Natural killer cell (primary cell): ENCODE measurements at regions of chr6 and their contacts with region 1.

Region 1: GRCh38 chr6:109382576-109383437 is 540 bp upstream of the CD164 start:
- DNase-seq: peak; percentile 93 to 97
- ATAC-seq: peak; percentile 65 to 82 (median 72)
- H3K4me3 ChIP-seq: peak overlapping the region; percentile 95
- H3K4me3 Mint-ChIP-seq: peak overlapping the region; percentile 96
- H3K27ac ChIP-seq: peak overlapping the region; percentile 93
- H3K27ac Mint-ChIP-seq: peak overlapping the region; percentile 88 to 98
- H3K4me1 ChIP-seq: peaks cover 15% of the 10 kb centered on the region
- H3K4me1 Mint-ChIP-seq: peaks cover 55 to 64% of the 10 kb centered on the region in 2 donors
- H3K27me3 ChIP-seq: no peaks in the 10 kb centered on the region
- H3K27me3 Mint-ChIP-seq: no peaks in the 10 kb centered on the region
- CTCF ChIP-seq: peak; percentile 79

Region 2: DNA sequence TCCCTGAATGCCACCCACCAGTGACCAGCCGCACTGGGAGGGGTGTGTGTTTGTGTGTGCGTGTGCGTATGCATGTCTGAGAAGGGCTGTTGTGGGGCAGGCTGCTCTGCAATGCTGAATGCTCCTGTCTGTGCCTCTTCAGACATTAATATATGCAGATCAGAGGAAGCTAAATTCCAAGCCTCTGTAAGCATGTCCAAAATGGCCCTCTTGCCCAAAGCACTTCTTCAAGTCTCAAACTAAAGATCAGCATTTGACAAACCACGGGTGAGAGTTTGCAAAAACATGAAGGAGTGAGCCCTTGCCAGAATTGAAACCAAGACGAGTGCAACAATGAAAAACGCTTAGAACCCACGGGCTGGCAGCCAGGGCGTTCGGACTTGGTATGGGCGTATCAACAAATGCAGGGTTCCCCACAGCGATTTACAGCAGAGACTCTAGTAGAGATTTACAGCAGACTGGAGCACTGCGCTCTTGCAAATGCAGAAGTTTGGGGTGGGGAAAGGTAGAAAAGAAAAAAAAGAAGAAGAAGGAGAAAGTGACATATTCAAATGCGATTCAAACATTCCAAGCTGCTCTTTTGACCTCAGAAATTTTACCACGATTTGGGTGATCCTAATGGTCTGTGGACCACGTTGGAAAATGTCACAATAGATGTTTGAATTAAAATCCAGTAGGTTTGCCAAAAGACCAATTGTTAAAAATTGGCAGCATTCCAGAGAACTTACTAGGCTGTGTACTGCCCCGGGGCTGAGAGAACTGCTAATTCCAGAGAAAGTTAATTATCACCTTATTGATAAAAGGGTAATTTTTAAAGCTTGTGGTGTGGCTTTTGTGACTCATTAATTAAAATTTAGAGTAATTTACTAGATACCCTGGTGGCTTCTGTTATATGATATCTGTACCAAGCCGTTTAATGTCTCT is 1562.2 kb before region 1 on chr6:
- intact Hi-C with region 1: loop called (anchors 5 kb)
- DNase-seq: peak in 1 of 2 donors; percentile 70
- ATAC-seq: peak in 1 of 3 donors; percentile 10
- H3K4me3 ChIP-seq: peak overlapping the region; percentile 16
- H3K4me3 Mint-ChIP-seq: peak overlapping the region; percentile 98
- H3K27ac ChIP-seq: peak overlapping the region; percentile 96
- H3K27ac Mint-ChIP-seq: peak overlapping the region; percentile 89 to 100
- H3K4me1 ChIP-seq: peaks cover 50% of the 10 kb centered on the region
- H3K4me1 Mint-ChIP-seq: peaks cover 76 to 82% of the 10 kb centered on the region in 2 donors
- H3K27me3 ChIP-seq: no peaks in the 10 kb centered on the region
- H3K27me3 Mint-ChIP-seq: no peaks in the 10 kb centered on the region
- CTCF ChIP-seq: no peak

Region 3: DNA sequence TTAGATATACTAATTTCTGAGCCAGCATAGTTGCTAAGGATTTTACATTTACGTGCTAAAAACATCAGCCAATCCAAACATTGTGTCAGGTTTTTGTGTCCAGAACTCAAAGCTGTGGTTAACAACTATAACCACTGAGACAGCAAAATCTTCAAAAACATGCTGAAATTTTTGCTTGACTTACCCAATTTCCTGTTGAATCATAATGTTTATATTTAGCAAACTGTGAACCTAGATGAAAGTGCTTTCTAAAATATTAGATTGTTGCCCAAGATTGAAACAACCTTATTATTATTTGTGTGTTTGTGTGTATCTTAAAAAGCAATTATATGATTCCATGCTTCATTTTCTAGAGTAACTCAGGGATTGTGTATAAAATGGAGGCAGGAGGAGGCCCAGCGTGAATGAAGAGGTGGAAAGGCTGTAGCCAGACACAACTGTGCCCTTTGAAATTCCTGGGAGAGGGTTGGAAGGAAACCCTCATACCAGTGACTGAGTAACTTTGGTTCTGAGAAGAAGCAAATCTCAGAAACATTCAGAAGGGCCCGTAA is 486.6 kb before region 1 on chr6:
- intact Hi-C with region 1: loop called (anchors 10 kb)
- DNase-seq: peak in 1 of 2 donors; percentile 77
- ATAC-seq: peak; percentile 81 to 90 (median 86)
- H3K4me3 ChIP-seq: no peak overlapping the region
- H3K4me3 Mint-ChIP-seq: peak overlapping the region; percentile 94
- H3K27ac ChIP-seq: peak overlapping the region; percentile 91
- H3K27ac Mint-ChIP-seq: peak overlapping the region; percentile 91 to 95
- H3K4me1 ChIP-seq: peaks cover 39% of the 10 kb centered on the region
- H3K4me1 Mint-ChIP-seq: peaks cover 39 to 43% of the 10 kb centered on the region in 2 donors
- H3K27me3 ChIP-seq: no peaks in the 10 kb centered on the region
- H3K27me3 Mint-ChIP-seq: no peaks in the 10 kb centered on the region
- CTCF ChIP-seq: no peak

Region 4: DNA sequence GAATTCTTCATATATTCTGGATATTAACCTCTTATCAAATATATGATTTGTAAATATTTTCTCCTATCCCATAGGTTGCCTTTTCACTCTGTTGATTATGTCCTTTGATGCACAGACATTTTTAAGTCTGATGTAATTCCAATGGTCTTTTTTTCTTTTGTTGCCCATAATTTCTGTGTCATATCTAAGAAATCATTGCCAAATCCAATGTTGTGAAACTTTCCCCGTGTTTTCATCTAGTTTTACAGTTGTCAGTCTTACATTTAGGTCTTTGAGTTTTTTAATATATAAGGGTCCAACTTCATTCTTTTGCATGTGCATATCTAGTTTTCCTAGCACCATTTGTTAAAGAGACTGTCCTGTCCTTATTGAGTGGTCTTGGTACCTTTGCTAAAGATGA is 399.7 kb before region 1 on chr6:
- intact Hi-C with region 1: no loop called
- DNase-seq: no peak
- ATAC-seq: no peak
- H3K4me3 ChIP-seq: no peak overlapping the region
- H3K4me3 Mint-ChIP-seq: no peak overlapping the region
- H3K27ac ChIP-seq: no peak overlapping the region
- H3K27ac Mint-ChIP-seq: no peak overlapping the region
- H3K4me1 ChIP-seq: no peaks in the 10 kb centered on the region
- H3K4me1 Mint-ChIP-seq: peaks cover 0 to 5% of the 10 kb centered on the region in 2 donors
- H3K27me3 ChIP-seq: no peaks in the 10 kb centered on the region
- H3K27me3 Mint-ChIP-seq: no peaks in the 10 kb centered on the region
- CTCF ChIP-seq: no peak

Region 5: DNA sequence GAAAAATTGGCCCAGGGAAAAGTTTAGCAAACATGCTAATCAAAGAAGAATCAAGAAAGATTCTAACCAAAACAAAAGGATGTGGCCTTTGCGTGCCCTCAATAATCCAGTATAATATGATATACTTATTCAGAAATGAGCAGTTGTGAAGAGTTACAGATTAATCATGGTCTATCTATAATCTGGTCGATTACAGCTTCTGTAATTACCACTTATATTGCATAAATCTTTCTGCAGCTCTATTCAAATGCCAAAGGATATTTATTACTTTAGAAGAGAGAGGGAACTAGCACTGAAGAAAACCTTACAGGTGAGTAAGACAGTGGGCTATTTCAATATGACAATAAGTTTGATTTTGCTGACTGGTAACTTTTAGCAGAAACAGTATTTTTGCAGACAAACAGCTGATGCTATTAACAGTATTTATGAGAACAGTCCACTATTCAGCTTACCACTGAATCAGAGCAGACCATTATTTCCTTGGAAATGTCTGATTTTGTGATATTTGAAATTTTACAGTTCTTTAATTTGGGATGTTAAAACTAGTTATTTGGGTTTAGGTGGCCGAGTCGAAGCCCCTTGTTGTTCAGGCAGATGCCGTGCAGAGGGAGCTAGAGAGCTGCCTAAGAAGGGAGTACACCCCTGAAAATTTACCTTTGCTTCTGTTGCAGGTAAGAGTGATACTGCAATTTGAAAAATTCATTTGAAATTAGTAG is 195.2 kb before region 1 on chr6:
- intact Hi-C with region 1: loop called (anchors 1 kb)
- DNase-seq: peak; percentile 43 to 82
- ATAC-seq: peak; percentile 71 to 92 (median 89)
- H3K4me3 ChIP-seq: no peak overlapping the region
- H3K4me3 Mint-ChIP-seq: no peak overlapping the region
- H3K27ac ChIP-seq: no peak overlapping the region
- H3K27ac Mint-ChIP-seq: no peak overlapping the region
- H3K4me1 ChIP-seq: no peaks in the 10 kb centered on the region
- H3K4me1 Mint-ChIP-seq: no peaks in the 10 kb centered on the region
- H3K27me3 ChIP-seq: peaks cover 3% of the 10 kb centered on the region
- H3K27me3 Mint-ChIP-seq: peaks cover 12 to 45% of the 10 kb centered on the region in 2 donors
- CTCF ChIP-seq: peak; percentile 98

Region 6: DNA sequence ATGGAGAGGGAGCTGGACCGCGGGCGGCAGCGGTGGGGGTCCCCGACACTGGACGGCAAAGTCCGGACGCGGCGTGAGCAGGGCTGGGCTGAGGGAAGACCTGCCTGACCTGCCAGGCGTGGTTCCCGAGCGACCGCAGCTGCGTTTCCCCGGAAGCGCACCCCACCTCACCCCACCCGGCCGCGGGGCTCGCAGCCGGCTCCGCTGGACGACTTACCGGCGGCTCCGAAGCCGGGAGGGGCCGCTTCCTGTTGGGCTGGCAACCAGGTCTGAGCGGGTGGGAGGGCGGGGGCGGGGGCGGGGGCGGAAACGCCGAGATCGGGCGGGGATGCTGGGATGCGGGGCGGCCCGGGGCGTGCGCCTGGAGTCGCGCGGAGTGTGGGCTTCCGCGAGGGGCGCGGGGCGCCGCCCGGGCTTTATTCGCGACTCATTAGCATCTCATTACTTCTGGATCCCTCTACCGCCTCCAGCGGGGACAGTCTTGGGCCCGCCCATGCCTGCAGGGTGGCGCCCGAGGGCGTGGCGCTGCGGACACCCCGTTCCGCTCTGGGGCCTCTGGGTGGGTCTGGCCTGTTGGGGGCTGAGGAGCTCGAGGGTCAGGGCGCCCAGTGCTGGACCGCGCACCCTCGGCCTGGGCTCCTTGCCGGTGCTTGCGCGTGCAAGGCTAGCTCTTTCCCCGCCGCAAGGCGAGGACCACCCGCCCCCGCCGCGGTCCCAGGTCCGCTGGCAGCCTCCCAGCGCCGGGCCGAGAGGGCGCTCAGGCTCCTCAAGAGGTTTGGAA is 72.9 kb after region 1 on chr6 and contains the start of gene MICAL1:
- intact Hi-C with region 1: loop called (anchors 1 kb)
- DNase-seq: peak; percentile 71 to 90
- ATAC-seq: peak; percentile 51 to 84 (median 60)
- H3K4me3 ChIP-seq: peak within 1 kb of the TSS; percentile 98
- H3K4me3 Mint-ChIP-seq: peak within 1 kb of the TSS; percentile 93
- H3K27ac ChIP-seq: peak within 1 kb of the TSS; percentile 99
- H3K27ac Mint-ChIP-seq: peak within 1 kb of the TSS; percentile 86 to 99
- H3K4me1 ChIP-seq: peaks cover 60% of the 10 kb centered on the region
- H3K4me1 Mint-ChIP-seq: peaks cover 45 to 52% of the 10 kb centered on the region in 2 donors
- H3K27me3 ChIP-seq: no peaks in the 10 kb centered on the region
- H3K27me3 Mint-ChIP-seq: no peaks in the 10 kb centered on the region
- CTCF ChIP-seq: peak; percentile 13
- total RNA-seq, gene MICAL1: 72.4 to 102 (median 81.3) TPM

Region 7: GRCh38 chr6:110815217-110816109 is 1432.7 kb after region 1 on chr6 and contains the start of gene CDK19:
- intact Hi-C with region 1: loop called (anchors 2 kb)
- DNase-seq: peak; percentile 97 to 99
- ATAC-seq: peak; percentile 79 to 92 (median 81)
- H3K4me3 ChIP-seq: peak within 1 kb of the TSS; percentile 70
- H3K4me3 Mint-ChIP-seq: peak within 1 kb of the TSS; percentile 94
- H3K27ac ChIP-seq: peak within 1 kb of the TSS; percentile 93
- H3K27ac Mint-ChIP-seq: peak within 1 kb of the TSS; percentile 98
- H3K4me1 ChIP-seq: peaks cover 13% of the 10 kb centered on the region
- H3K4me1 Mint-ChIP-seq: peaks cover 23 to 27% of the 10 kb centered on the region in 2 donors
- H3K27me3 ChIP-seq: no peaks in the 10 kb centered on the region
- H3K27me3 Mint-ChIP-seq: no peaks in the 10 kb centered on the region
- CTCF ChIP-seq: no peak
- total RNA-seq, gene CDK19: 21.2 to 30.8 (median 25.9) TPM